Psoas muscle (tissue), 8 donors: ENCODE measurements at regions of chr3 and their contacts with region 1.

Region 1: DNA sequence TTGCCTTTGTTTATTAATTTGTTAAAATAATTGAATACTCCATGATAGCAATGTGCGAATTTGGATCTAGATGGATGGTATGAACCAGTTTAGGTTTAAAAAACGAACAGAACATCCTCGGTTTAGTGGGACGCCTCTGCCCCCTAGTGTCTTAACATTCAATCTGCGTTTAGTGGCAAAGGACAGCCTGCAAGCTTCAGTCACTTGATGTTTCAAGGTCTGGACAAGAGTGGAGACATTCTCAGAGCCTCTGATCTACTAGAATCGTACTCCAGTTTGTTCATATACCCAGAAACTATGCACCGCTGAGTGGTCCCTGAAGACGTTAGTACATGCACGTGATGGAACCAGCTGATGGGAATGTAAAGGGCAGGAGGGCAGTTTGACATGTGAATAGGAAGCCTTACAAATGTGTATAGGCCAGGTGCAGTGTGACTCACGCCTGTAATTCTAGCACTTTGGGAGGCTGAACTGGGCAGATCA is 17.8 kb upstream of the ATP13A4 start:
- DNase-seq: peak; percentile 37 to 52
- ATAC-seq: peak; percentile 63 to 83 (median 68)
- H3K4me3 ChIP-seq: no peak overlapping the region
- H3K27ac ChIP-seq: no peak overlapping the region
- H3K4me1 ChIP-seq: no peaks in the 10 kb centered on the region
- H3K27me3 ChIP-seq: no peaks in the 10 kb centered on the region
- CTCF ChIP-seq: peak; percentile 84

Region 2: GRCh38 chr3:192467230-192468140 is 1105.0 kb before region 1 on chr3:
- intact Hi-C with region 1: loop called in 1 of 2 experiments (anchors 5 kb)
- DNase-seq: no peak
- ATAC-seq: peak; percentile 64 to 87 (median 76)
- H3K4me3 ChIP-seq: no peak overlapping the region
- H3K27ac ChIP-seq: no peak overlapping the region
- H3K4me1 ChIP-seq: no peaks in the 10 kb centered on the region
- H3K27me3 ChIP-seq: peaks cover 0 to 4% (median 3%) of the 10 kb centered on the region in 3 donors
- CTCF ChIP-seq: peak; percentile 87

Region 3: GRCh38 chr3:192566706-192567290 is 1005.7 kb before region 1 on chr3:
- intact Hi-C with region 1: loop called in 1 of 2 experiments (anchors 5 kb)
- DNase-seq: peak; percentile 40 to 62
- ATAC-seq: peak; percentile 54 to 83 (median 75)
- H3K4me3 ChIP-seq: no peak overlapping the region
- H3K27ac ChIP-seq: no peak overlapping the region
- H3K4me1 ChIP-seq: no peaks in the 10 kb centered on the region
- H3K27me3 ChIP-seq: no peaks in the 10 kb centered on the region
- CTCF ChIP-seq: peak; percentile 81

Region 4: GRCh38 chr3:192816351-192816750 is 756.1 kb before region 1 on chr3:
- intact Hi-C with region 1: loop called (anchors 2 to 5 kb)
- DNase-seq: no peak
- ATAC-seq: peak in 2 of 4 donors; percentile 43 to 80
- H3K4me3 ChIP-seq: no peak overlapping the region
- H3K27ac ChIP-seq: no peak overlapping the region
- H3K4me1 ChIP-seq: no peaks in the 10 kb centered on the region
- H3K27me3 ChIP-seq: no peaks in the 10 kb centered on the region
- CTCF ChIP-seq: peak; percentile 82

Region 5: DNA sequence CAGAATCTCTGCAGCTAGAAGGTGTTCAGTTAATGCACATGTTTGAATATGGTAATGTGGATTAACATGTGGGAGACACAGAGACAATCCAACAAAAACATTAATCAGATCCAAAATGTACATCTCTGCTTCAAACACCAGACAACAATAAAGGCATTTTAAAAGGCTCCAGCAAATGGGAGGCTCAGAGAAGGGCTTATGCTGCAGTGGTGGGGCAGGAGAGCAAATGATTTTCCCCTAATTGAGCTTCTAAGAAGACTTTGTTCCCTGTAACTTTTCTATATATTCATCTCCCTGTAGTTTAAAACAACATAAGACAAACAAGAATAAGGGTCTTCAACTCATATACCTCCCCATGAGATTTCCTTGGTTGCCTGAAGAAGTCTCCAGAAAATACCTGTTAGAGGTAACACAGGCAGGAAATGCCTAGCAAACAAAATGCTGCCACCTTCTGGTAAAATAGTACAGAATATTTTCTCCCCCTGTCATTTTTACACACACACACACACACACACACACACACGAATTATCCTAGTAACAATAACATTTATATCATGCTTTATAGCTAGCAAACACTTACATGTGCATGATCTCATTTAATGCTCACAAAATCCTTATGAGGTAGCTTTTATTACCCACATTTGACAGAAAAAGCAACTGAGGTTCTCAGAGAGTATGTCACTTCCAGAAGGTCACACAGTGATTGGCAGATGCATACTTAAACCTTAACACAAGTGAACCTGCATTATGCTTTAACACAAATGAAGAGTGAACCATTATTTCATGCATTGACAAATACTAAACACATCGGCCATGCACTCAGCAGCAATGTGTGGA is 531.4 kb before region 1 on chr3:
- intact Hi-C with region 1: loop called (anchors 5 kb)
- DNase-seq: no peak
- ATAC-seq: peak in 1 of 4 donors; percentile 78
- H3K4me3 ChIP-seq: no peak overlapping the region
- H3K27ac ChIP-seq: no peak overlapping the region
- H3K4me1 ChIP-seq: no peaks in the 10 kb centered on the region
- H3K27me3 ChIP-seq: no peaks in the 10 kb centered on the region
- CTCF ChIP-seq: peak; percentile 48

Region 6: GRCh38 chr3:193190146-193190786 is 382.2 kb before region 1 on chr3:
- intact Hi-C with region 1: loop called (anchors 5 kb)
- DNase-seq: no peak
- ATAC-seq: peak; percentile 65 to 89 (median 81)
- H3K4me3 ChIP-seq: no peak overlapping the region
- H3K27ac ChIP-seq: no peak overlapping the region
- H3K4me1 ChIP-seq: no peaks in the 10 kb centered on the region
- H3K27me3 ChIP-seq: no peaks in the 10 kb centered on the region
- CTCF ChIP-seq: peak; percentile 57

Region 7: DNA sequence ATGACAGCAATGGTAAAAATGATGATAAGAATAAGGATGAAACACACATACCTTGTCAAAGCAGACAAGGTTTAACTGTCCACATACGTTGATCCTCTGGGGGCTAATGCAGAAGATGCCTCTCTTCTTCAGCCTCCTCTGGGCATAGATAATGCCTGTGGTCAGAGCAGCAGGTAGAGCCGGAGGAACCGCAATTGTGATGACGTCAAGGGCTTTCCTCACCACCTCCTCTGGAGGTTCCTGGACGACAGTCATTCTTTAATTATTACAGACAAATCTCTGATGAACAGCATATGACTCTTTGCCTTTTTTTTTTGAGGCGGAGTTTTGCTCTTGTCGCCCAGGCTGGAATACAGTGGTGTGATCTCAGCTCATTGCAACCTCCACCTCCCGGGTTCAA is 107.6 kb before region 1 on chr3:
- intact Hi-C with region 1: loop called (anchors 5 kb)
- DNase-seq: no peak
- ATAC-seq: no peak
- H3K4me3 ChIP-seq: no peak overlapping the region
- H3K27ac ChIP-seq: no peak overlapping the region
- H3K4me1 ChIP-seq: no peaks in the 10 kb centered on the region
- H3K27me3 ChIP-seq: no peaks in the 10 kb centered on the region
- CTCF ChIP-seq: no peak